HAP-1 (cell line): ENCODE measurements at regions of chr3 and their contacts with region 1.

Region 1: DNA sequence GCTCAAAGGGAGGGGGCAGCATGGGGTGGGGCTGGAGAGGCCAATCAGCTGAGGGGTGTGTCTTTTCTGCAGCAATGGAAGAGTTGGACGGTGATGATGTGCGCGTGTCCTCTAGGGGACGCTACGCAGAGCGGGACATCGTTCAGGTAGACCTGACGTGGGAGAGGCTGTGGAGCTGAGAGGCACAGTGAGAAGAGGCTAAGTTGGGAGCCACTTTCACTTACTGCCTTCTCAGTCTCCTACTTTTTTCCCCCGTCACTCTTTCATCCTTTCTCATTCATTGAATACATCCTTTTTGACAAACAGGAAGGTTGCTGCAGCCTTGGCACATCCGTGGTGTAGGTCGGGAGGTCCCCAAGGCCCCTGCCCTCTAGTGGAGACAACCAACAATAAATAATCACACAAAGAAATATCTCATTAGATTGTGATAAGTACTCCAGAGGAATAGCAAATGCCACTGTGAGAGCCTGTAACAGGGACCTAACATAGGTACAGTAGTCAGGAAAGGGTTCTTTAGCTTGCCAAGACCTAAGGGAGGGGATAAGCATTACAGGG is 4.4 kb upstream of the BRPF1 start:
- DNase-seq: peak; percentile 46
- H3K4me3 ChIP-seq: no peak overlapping the region
- H3K4me1 ChIP-seq: 0 out of 2 replicates have a peak, but pooled peaks cover 3% of the 10 kb centered on the region
- H3K27me3 ChIP-seq: no peaks in the 10 kb centered on the region

Region 2: DNA sequence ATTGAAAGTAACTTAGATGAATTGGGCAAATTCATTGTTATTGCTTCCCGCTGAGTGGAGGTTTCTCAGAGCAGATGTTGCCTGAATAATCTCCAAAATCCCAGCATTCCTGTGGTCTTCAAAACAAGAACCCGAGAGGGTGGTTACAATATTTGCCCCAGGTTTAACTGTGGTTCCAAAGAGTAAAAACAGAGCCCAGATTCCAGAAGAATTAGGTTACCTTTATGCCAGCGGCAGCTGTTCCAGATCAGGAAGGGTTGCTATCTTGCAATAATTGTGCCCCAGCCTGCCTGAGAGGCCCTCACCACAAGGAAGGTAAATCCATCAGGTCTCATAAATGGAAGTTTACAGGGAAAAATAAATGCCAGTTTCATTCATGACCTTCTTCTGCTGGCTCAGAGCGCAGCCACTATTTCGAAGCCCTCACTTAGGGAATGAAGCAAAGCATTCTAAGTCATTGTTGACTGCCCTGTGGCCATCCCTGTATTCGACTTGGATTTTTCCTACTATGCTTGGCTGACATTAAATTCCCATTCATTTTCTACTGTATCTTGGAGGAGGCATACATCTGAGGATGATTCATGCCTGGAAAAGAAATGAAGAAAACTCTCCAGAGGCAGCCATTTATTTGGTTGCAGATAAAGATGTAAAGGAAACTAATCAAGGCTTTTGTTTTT is 1137.1 kb before region 1 on chr3:
- in situ Hi-C with region 1: no loop called
- DNase-seq: no peak
- H3K4me3 ChIP-seq: no peak overlapping the region
- H3K4me1 ChIP-seq: no peaks in the 10 kb centered on the region
- H3K27me3 ChIP-seq: peaks cover 5% of the 10 kb centered on the region; the same call in 1 of the 2 replicates

Region 3: DNA sequence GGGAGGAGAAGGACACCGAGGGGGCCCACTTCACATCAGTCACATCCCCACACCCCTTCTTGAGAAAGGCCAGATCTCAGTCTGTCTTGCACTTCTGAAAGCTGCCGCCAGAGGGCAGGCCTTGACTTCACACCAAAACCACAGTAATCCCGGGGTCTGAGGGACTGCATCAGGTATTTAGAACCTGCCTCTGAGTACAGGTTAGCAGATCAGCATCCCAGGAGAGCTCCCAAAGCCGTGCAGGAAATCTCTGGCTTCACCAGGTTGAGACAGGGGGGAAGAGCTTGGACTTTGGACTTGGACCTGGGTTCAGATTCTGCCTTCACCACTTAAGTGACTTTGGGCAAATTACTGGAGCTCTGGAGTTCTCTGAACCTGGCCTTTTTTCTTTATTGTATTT is 223.8 kb before region 1 on chr3:
- in situ Hi-C with region 1: loop called (anchors 10 kb)
- DNase-seq: peak; percentile 55 to 88
- H3K4me3 ChIP-seq: no peak overlapping the region
- H3K4me1 ChIP-seq: no peaks in the 10 kb centered on the region
- H3K27me3 ChIP-seq: no peaks in the 10 kb centered on the region

Region 4: DNA sequence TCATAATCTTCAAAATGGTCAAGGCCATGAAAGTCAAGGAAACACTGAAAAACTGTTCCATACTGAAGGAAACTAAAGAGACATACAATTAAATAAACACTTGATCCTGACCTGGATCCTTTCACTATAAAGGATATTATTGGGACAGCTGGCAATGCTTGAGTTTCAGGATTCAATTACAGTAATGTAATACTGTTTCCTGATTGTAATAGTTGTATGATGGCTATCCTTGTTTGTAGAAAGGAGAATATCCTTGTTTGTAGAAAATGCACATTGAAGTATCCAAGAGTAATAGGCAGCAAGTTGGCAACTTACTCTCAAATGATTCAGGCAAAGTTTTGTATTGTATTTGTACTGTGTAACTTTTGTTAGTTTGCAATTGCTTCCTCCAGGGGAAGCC is 148.3 kb after region 1 on chr3:
- in situ Hi-C with region 1: no loop called
- DNase-seq: no peak
- H3K4me3 ChIP-seq: no peak overlapping the region
- H3K4me1 ChIP-seq: no peaks in the 10 kb centered on the region
- H3K27me3 ChIP-seq: no peaks in the 10 kb centered on the region